AG04449 (cell line): ENCODE measurements at regions of chr1 and their contacts with region 1.

Region 1: GRCh38 chr1:157156058-157156541 is 17.9 kb upstream of the ETV3 start:
- DNase-seq: no peak
- H3K4me3 ChIP-seq: peak overlapping the region; percentile 32; the same call in 1 of the 2 replicates
- CTCF ChIP-seq: peak; percentile 93

Region 2: DNA sequence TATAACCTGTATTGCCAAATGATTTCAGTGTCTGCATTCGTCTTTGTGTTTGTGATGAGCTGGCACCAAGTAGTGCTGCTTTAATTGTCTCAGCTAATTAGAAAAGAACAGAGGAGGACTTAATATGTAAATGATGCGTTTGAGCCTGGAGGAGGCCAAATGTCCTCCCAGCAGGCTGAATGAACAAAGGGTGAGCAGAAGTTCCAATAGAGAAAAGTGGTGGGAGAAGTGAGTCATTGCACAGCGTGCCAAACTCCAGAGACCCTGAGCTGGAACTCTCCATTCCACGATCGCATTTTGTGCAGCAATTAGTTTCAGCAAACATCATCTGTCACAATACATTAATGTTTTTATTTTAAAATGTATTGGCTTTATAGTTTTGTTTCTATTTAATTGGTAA is 74.4 kb before region 1 on chr1:
- CTCF ChIA-PET with region 1: interaction called, 478 read pairs
- POLR2A ChIA-PET with region 1: no interaction called
- DNase-seq: no peak
- H3K4me3 ChIP-seq: no peak overlapping the region
- CTCF ChIP-seq: no peak

Region 3: DNA sequence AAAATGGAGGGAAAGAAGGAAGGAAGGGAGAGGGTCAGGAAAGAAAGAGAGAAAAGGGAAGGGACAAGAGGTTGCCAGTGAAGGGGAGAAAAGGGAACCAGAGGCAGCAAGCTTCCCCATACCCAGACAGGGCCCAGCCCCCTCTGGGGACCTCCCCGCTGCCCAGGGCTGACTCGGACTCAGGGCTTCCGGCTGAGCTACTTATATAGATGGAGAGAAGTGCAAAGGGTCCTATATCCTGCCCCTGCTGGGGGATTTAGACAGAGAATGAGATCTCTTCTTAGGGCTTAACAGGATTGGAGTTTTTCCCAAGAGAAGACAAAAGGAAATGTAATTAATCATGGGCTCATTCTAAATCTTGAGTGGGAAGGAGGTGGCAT is 56.5 kb before region 1 on chr1 and contains the start of gene ETV3L:
- CTCF ChIA-PET with region 1: interaction called, 50 read pairs
- POLR2A ChIA-PET with region 1: no interaction called
- DNase-seq: no peak
- H3K4me3 ChIP-seq: no peak within 1 kb of the TSS
- CTCF ChIP-seq: no peak

Region 4: DNA sequence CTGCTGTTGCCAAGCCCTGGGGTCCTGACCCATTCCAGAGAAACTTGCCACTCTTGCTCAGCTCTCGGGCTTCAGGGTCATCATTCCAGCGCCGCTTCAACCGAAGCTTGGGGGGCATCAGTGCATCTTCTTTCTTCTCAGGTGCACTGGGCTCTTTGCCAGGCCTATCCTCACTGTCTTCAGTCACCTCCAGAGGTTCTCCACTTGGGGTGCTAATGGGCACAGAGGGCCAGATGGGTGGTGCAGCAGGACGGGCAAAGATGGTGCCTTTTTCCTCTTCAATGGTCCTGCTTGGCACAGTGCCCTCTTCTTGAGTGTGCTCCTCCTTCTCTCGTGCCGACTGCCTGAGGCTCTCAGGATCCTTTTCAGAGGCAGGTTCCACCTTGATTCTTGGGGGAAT is 31.2 kb before region 1 on chr1:
- CTCF ChIA-PET with region 1: interaction called, 10 read pairs
- POLR2A ChIA-PET with region 1: interaction called, 4 read pairs
- DNase-seq: no peak
- H3K4me3 ChIP-seq: no peak overlapping the region
- CTCF ChIP-seq: no peak

Region 5: DNA sequence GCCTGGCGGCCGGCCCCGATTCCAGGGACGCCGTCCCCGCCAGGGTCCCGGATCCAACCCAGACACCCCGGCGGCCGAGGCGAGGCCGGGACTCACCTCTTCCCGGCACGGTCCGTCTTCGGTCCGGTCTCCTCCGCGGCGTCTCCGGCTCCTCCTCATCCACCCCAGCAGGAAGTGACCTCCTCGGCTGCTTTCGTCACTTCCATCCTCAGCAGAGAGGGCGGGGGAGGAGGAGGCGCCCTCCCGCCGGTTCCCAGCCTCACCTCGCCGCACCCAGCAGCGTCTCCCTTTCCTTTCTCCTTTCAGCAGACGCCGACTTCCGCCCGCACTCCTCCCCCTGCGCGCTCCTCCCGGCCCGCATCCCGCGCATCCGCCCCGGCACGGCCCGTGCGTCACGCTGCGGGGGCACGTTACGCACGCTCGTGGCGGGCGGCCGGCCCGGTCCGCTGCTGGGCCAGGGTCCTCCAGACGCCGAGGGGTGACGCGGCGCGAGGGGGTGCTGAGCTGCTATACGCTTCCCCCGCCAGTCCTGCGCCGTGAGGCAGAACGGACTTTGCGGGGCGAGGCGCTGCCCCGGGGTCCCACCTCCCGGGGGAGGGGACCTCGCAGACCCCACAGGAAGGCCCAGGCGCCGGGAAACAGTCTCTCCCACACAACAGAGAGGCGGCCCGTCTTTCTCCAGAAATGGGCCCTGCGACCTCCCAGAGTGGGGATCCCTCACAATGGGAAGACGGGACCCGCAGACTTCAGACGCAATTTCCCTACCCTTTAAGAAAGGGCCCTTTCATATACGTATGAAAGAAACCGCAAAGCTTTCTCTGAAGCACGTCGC is 17.7 kb before region 1 on chr1 and contains the start of gene ETV3:
- CTCF ChIA-PET with region 1: interaction called, 117 read pairs
- POLR2A ChIA-PET with region 1: interaction called, 6 read pairs
- DNase-seq: peak; percentile 53
- H3K4me3 ChIP-seq: peak within 1 kb of the TSS; percentile 95
- CTCF ChIP-seq: no peak

Region 6: DNA sequence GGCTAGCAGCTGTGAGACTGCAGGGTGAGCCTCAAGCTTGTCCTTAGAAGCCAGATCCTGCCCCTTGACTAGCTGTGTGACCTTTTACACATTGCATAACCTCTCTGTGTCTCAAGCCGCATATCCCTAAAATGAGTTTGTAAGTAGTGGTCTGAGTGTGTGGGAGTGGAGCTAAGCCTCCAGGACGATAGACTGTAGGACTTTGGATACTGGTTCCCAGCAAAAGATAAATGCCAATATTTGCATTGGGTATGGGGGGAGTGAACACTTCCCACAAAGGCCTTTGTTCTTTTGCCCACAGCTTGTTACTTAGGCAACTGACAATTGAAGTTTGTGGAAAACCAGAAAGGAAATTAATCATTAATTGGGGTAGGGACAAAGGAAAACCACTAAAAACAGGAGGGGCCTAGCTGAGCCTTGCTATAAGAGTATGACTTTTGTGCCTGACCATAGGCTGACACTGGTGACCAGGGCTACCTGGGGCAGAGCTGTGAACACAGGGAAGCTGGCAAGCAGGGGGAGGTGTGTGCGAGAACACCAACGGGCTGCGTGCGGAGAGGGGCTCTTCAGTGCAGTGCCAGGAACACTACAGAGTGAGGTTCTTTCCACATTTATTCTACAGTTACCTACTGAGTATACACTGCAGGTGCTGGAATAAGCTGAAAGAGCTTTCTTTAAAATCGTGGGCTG is 84.5 kb after region 1 on chr1:
- CTCF ChIA-PET with region 1: no interaction called
- POLR2A ChIA-PET with region 1: no interaction called
- DNase-seq: no peak
- H3K4me3 ChIP-seq: no peak overlapping the region
- CTCF ChIP-seq: no peak